ENCODE measurements at regions of chr16 and their contacts with region 1.

Region 1: DNA sequence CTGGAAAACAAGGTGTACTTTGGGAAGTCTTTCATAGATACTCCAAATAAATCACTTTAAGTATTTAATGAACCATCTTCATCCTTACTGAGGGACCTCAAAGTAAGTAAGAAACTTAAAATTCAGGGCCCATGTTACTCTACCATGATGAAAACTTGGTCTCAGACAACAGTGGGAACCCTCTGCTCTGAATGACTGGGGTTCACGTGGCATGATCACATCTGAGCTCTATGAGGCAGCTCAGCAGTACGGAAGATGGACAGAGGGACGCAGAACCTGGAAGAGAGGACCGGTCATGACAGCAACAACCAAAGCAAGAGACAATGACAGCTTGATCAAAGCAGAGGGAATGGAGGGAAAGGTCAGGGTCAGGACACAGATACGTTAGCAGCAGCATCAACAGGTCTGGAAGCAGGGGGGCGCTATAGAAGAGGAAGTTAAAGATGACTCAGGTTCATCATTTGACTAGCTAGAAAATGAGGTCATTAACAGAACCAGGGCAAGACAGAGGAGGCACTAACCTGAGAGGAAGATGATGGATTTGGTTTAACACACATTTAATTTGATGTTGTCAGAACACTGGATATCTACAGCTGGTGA is 9.5 kb downstream of the XPO6 start:
- DNase-seq: peak; percentile 47
- CTCF ChIP-seq: peak; percentile 17

Region 2: DNA sequence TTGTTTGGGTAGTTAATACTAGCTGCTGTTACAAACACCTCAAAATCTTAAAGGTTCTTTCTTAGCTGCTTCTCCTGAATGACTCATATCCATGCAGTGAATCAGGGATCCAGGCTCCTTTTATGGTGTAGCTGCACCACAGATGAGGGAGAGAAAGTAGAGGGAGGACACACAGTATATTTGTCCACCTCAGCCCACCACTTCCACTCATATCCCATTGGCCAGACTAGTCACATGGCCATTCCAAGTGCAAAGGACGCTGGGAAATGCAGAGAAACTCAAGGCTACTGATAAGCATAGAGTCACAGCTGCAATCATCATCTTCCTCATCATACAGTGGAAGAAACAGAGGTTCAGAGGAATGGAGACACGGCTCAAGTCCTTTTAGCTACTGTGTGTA is 202.6 kb before region 1 on chr16:
- in situ Hi-C with region 1: no loop called
- DNase-seq: no peak
- CTCF ChIP-seq: no peak

Region 3: DNA sequence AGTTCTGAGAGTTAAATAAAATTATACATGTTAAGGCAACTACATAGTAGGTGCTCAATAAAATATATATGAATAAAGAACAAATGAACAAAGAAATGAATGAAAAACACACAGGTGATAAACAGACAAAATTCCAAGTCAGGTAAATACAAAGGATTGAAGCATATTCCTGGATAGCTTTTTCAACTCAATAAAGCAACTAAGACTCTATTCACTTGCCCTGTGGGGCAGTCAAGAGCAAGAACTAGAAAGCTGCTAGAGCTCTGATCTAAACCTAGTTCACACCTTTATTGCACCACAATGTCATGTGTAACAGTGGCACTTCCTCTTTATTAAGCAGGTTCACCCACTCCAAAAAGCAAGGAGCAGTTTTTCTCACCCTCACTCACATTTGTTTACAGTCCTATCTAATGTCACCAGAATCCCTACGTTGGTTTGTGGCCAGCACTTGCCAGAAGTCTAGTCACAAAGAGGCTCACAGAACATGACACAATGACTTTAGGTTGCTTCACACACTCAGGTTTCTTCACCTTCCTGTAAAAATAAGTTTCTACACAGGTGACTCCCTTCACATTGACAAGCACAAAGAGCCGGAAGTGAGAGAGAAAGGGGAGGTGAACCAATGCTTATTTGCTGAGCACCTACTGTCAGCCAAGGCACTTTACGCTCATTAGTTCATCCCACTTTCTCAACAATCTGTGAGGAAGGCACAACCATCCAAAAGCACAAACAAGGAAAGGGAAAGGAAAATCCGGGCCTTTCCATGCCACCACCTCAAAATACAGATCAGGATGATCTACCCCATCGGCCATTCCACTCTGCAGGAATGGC is 61.2 kb before region 1 on chr16:
- in situ Hi-C with region 1: loop called (anchors 10 kb)
- DNase-seq: peak; percentile 69
- CTCF ChIP-seq: peak; percentile 4